ENCODE measurements at regions of chr16 and their contacts with region 1.

Region 1: GRCh38 chr16:48542020-48542473 is 67.9 kb downstream of the N4BP1 start:
- DNase-seq: peak in 1 of 2 donors; percentile 75
- H3K4me3 ChIP-seq: no peak overlapping the region
- H3K27ac ChIP-seq: peak overlapping the region in 1 of 2 donors; percentile 30
- H3K4me1 ChIP-seq: peaks cover 6 to 12% of the 10 kb centered on the region in 2 donors
- H3K27me3 ChIP-seq: no peaks in the 10 kb centered on the region
- CTCF ChIP-seq: peak; percentile 38 to 63 (median 43)

Region 2: GRCh38 chr16:48271728-48272127 is 270.3 kb before region 1 on chr16:
- intact Hi-C with region 1: loop called (anchors 5 kb)
- DNase-seq: no peak
- H3K4me3 ChIP-seq: no peak overlapping the region
- H3K27ac ChIP-seq: peak overlapping the region; percentile 12 to 70
- H3K4me1 ChIP-seq: peaks cover 0 to 11% of the 10 kb centered on the region in 2 donors
- H3K27me3 ChIP-seq: no peaks in the 10 kb centered on the region
- CTCF ChIP-seq: peak in 1 of 3 experiments; percentile 24

Region 3: GRCh38 chr16:48353565-48354163 is 188.4 kb before region 1 on chr16:
- intact Hi-C with region 1: loop called (anchors 5 kb)
- DNase-seq: peak in 1 of 2 donors; percentile 75
- H3K4me3 ChIP-seq: no peak overlapping the region
- H3K27ac ChIP-seq: no peak overlapping the region
- H3K4me1 ChIP-seq: peaks cover 0 to 3% of the 10 kb centered on the region in 2 donors
- H3K27me3 ChIP-seq: no peaks in the 10 kb centered on the region
- CTCF ChIP-seq: peak; percentile 71 to 86 (median 82)

Region 4: GRCh38 chr16:48687421-48688038 is 145.5 kb after region 1 on chr16:
- intact Hi-C with region 1: no loop called
- DNase-seq: no peak
- H3K4me3 ChIP-seq: no peak overlapping the region
- H3K27ac ChIP-seq: no peak overlapping the region
- H3K4me1 ChIP-seq: no peaks in the 10 kb centered on the region
- H3K27me3 ChIP-seq: no peaks in the 10 kb centered on the region
- CTCF ChIP-seq: peak; percentile 2 to 48 (median 32)

Region 5: GRCh38 chr16:48745541-48745940 is 203.5 kb after region 1 on chr16:
- intact Hi-C with region 1: no loop called
- DNase-seq: no peak
- H3K4me3 ChIP-seq: no peak overlapping the region
- H3K27ac ChIP-seq: no peak overlapping the region
- H3K4me1 ChIP-seq: no peaks in the 10 kb centered on the region
- H3K27me3 ChIP-seq: no peaks in the 10 kb centered on the region
- CTCF ChIP-seq: no peak

Measured in ascending aorta (tissue), 2 donors.